Caco-2 (cell line): ENCODE measurements at regions of chr12 and their contacts with region 1.

Region 1: DNA sequence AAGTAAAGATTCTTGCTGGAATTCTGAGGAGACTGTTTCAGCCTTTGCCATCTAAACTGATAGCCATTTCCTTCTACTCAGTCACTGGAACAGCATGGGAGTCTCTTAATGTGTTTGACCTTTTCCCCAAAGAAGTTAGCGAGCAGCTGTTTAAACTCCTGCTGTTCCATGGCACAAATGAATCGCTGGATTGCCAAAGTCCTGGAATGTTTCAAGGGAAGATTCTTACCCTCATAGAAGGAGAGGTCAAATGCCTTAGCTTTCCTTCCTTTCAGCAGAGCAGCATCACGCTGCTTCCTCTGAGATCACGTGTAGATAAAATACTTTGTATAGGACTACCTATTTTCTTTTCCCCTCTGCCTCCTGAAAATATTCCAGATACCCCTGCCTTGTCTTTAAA is 10.5 kb upstream of the NR2C1 start:
- DNase-seq: peak; percentile 62 to 76
- H3K4me3 ChIP-seq: no peak overlapping the region
- H3K4me3 Mint-ChIP-seq: peak overlapping the region; percentile 55
- H3K27ac Mint-ChIP-seq: peak overlapping the region; percentile 72
- H3K4me1 ChIP-seq: peaks cover 33% of the 10 kb centered on the region
- H3K4me1 Mint-ChIP-seq: peaks cover 24% of the 10 kb centered on the region
- H3K27me3 ChIP-seq: no peaks in the 10 kb centered on the region
- H3K27me3 Mint-ChIP-seq: no peaks in the 10 kb centered on the region
- CTCF ChIP-seq: no peak

Region 2: GRCh38 chr12:94875525-94875924 is 208.4 kb before region 1 on chr12:
- CTCF ChIA-PET with region 1: no interaction called
- POLR2A ChIA-PET with region 1: no interaction called
- intact Hi-C with region 1: no loop called
- DNase-seq: peak in 1 of 2 experiments; percentile 53
- H3K4me3 ChIP-seq: no peak overlapping the region
- H3K4me3 Mint-ChIP-seq: no peak overlapping the region
- H3K27ac Mint-ChIP-seq: no peak overlapping the region
- H3K4me1 ChIP-seq: peaks cover 5% of the 10 kb centered on the region; the same call in 1 of the 2 replicates
- H3K4me1 Mint-ChIP-seq: peaks cover 7% of the 10 kb centered on the region
- H3K27me3 ChIP-seq: peaks cover 3% of the 10 kb centered on the region
- H3K27me3 Mint-ChIP-seq: peaks cover 27% of the 10 kb centered on the region
- CTCF ChIP-seq: peak; percentile 34 to 35

Region 3: GRCh38 chr12:95072900-95073697 is 10.8 kb before region 1 on chr12 and contains the start of gene NR2C1:
- CTCF ChIA-PET with region 1: interaction called, 18 read pairs
- POLR2A ChIA-PET with region 1: interaction called, 12 read pairs
- intact Hi-C with region 1: no loop called
- DNase-seq: peak; percentile 96 to 97
- H3K4me3 ChIP-seq: peak within 1 kb of the TSS; percentile 94
- H3K4me3 Mint-ChIP-seq: peak within 1 kb of the TSS; percentile 91
- H3K27ac Mint-ChIP-seq: peak within 1 kb of the TSS; percentile 94
- H3K4me1 ChIP-seq: peaks cover 5% of the 10 kb centered on the region; the same call in 1 of the 2 replicates
- H3K4me1 Mint-ChIP-seq: peaks cover 6% of the 10 kb centered on the region
- H3K27me3 ChIP-seq: no peaks in the 10 kb centered on the region
- H3K27me3 Mint-ChIP-seq: no peaks in the 10 kb centered on the region
- CTCF ChIP-seq: peak in 1 of 2 experiments; percentile 59
- total RNA-seq, gene NR2C1: 49.7 and 51.1 TPM in 2 replicates

Region 4: GRCh38 chr12:95102916-95103671 is 19.2 kb after region 1 on chr12:
- CTCF ChIA-PET with region 1: no interaction called
- POLR2A ChIA-PET with region 1: no interaction called
- intact Hi-C with region 1: loop called (anchors 1 kb)
- DNase-seq: no peak
- H3K4me3 ChIP-seq: no peak overlapping the region
- H3K4me3 Mint-ChIP-seq: no peak overlapping the region
- H3K27ac Mint-ChIP-seq: no peak overlapping the region
- H3K4me1 ChIP-seq: peaks cover 23% of the 10 kb centered on the region
- H3K4me1 Mint-ChIP-seq: peaks cover 23% of the 10 kb centered on the region
- H3K27me3 ChIP-seq: no peaks in the 10 kb centered on the region
- H3K27me3 Mint-ChIP-seq: no peaks in the 10 kb centered on the region
- CTCF ChIP-seq: no peak